Mammary epithelial cell (primary cell): ENCODE measurements at regions of chr6 and their contacts with region 1.

Region 1: DNA sequence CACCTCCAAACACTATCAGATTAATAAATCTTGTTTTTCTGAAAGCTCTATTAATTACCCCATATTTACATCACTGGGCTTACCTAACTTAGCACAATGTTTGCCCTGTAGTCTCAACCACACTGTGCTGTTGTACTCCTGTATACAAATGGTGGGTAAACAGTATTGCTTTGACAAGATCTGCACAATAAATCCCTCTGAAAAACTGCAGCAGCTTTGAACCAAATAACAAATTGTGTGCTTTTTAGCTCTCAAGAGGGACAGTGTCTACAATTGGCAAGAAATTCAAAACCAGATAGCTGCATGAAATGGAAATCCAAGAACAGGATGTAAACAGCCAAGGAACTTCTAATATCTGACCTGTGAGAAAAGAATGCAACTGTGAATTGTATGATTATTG is 10.4 kb downstream of the KIF6 start:
- DNase-seq: no peak
- H3K4me3 ChIP-seq: no peak overlapping the region
- H3K27ac ChIP-seq: no peak overlapping the region
- H3K4me1 ChIP-seq: no peaks in the 10 kb centered on the region
- H3K27me3 ChIP-seq: peaks cover 6% of the 10 kb centered on the region
- CTCF ChIP-seq: no peak

Region 2: GRCh38 chr6:39664173-39664572 is 50.6 kb before region 1 on chr6:
- CTCF ChIA-PET with region 1: no interaction called
- dilution Hi-C with region 1: loop called (anchors 5 kb)
- in situ Hi-C with region 1: no loop called
- intact Hi-C with region 1: no loop called
- DNase-seq: no peak
- H3K4me3 ChIP-seq: no peak overlapping the region
- H3K27ac ChIP-seq: no peak overlapping the region
- H3K4me1 ChIP-seq: no peaks in the 10 kb centered on the region
- H3K27me3 ChIP-seq: peaks cover 5% of the 10 kb centered on the region
- CTCF ChIP-seq: no peak

Region 3: DNA sequence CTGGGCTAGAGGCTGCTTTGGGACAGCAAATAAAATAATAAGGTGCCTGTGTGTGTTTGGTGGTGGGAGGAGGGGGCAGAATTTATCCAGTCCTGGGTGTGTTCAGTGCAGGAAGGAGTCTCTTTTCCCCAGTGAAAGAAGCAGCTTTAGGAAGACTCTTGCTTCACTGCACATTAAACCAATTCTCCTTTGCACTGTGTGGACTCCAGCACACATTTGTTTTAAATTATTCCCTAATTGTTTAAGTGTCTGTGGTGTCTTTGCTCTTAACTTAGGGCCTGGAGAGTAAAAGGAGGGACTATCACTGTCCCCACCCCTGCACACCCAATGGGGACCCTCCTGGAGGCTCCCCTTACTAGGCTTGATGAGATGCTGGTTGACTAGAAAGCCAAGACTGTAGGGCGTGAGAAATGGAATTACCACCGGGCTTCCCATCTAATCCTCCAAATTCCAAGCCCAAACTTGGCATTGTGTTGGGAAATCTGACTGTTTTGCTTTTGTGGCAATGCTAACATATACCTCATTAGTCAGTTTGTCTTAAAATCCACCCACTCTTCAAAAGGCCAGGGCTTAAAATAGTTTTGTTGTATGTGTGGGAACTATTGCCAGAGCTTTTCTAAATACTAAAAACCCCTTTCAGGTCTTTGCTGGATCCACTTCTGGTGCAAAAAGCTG is 63.9 kb after region 1 on chr6:
- CTCF ChIA-PET with region 1: no interaction called
- dilution Hi-C with region 1: no loop called
- in situ Hi-C with region 1: no loop called
- intact Hi-C with region 1: no loop called
- DNase-seq: no peak
- H3K4me3 ChIP-seq: no peak overlapping the region
- H3K27ac ChIP-seq: no peak overlapping the region
- H3K4me1 ChIP-seq: no peaks in the 10 kb centered on the region
- H3K27me3 ChIP-seq: no peaks in the 10 kb centered on the region
- CTCF ChIP-seq: no peak